Sigmoid colon (tissue), 7 donors: ENCODE measurements at regions of chr17 and their contacts with region 1.

Region 1: DNA sequence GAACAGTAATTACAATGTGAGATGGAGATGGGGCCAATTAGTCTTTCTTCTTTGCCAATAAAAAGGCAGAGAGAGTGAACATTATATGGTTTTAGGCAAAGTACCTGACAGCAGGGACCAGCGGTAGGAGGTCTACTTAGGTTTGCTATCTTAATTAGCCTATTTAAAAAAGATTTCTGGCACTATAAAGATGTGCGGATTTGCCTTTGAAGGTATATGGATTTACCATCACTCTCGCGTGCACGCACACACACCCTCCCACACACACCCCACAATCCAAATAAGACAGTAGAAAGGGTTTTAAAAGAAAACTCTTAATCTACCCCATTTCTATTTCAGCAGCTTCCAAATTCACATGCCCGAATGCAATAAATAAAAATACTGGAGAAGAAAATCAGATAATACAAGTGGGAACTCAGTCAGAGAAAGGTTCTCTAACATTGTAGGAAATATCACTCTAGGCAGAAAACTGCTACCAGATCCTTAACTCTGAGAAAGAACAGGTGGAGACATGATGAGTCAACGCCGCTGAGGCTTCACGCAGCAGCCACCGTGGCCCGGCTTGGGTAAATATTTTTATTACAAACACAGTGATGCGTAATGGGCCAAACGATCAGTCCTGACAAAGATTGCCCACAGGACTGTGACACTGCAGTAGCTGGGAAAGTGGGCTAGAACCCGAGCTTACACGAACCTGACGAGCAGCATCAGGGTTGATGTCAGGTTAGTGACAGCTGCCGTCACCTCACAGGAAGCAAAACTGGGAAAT is 66.6 kb upstream of the AXIN2 start:
- DNase-seq: peak; percentile 79
- H3K4me3 ChIP-seq: no peak overlapping the region
- H3K27ac ChIP-seq: peak overlapping the region; percentile 17 to 60 (median 43)
- H3K4me1 ChIP-seq: peaks cover 0 to 20% (median 12%) of the 10 kb centered on the region in 4 donors
- H3K27me3 ChIP-seq: no peaks in the 10 kb centered on the region
- CTCF ChIP-seq: no peak
- EP300 ChIP-seq: peak in 3 of 4 donors; percentile 27 to 71 (median 50)
- POLR2A ChIP-seq: no peak

Region 2: DNA sequence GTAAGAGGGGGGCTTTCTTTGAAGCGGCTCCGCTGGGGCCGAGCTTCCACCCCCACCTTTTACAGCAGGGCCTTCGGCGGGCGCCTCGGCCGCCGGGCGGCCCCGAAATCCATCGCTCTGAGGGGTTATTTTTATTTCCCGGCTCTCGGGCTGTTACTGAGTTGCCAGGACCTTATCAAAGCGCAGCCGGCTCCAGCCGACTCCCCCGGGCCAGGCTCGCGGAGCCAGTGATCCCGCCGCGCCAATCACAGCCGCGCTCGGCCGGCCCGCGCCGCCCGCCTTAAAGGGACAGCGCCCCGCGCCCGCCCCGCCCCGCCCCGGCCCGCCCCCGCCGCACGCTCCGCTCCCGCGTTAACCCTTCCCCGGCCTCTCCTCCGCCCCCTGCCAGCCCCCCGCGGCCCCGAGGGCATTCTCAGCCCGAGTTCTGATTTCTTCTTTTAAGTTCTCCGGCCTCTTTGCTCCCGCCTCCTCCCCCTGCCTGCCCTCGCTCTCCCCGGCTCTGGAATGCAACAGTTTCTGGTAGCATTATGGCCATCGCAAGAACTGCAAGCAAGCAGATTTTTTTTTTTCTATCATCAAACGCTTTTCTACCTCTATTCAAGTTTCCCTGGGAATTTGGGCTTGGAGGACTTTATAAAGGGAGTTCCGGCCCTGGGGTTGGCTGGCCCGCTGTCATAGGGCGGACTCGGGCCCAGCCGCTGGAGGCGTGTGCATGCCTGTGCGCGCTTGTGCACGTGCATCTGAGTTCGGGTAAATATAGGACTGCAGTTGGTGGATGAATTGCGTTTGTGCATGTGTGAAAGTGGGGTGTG is 66.5 kb before region 1 on chr17 and contains the start of gene AXIN2:
- intact Hi-C with region 1: loop called (anchors 5 kb)
- DNase-seq: peak; percentile 95
- H3K4me3 ChIP-seq: peak within 1 kb of the TSS; percentile 85 to 98 (median 96)
- H3K27ac ChIP-seq: peak within 1 kb of the TSS in 3 of 4 donors; percentile 94 to 98 (median 97)
- H3K4me1 ChIP-seq: peaks cover 0 to 42% (median 24%) of the 10 kb centered on the region in 4 donors
- H3K27me3 ChIP-seq: no peaks in the 10 kb centered on the region
- CTCF ChIP-seq: peak; percentile 27 to 54 (median 42)
- EP300 ChIP-seq: no peak
- POLR2A ChIP-seq: no peak
- total RNA-seq, gene AXIN2: 9.1 to 16.1 (median 12.5) TPM